CD8-positive, alpha-beta T cell (primary cell): ENCODE measurements at regions of chr9 and their contacts with region 1.

Region 1: GRCh38 chr9:79868567-79869189 is 296.9 kb downstream of the TLE4 start:
- DNase-seq: peak in 1 of 9 experiments; percentile 31
- ATAC-seq: no peak
- H3K4me3 ChIP-seq: no peak overlapping the region
- H3K4me3 Mint-ChIP-seq: no peak overlapping the region
- H3K27ac ChIP-seq: no peak overlapping the region
- H3K27ac Mint-ChIP-seq: no peak overlapping the region
- H3K4me1 ChIP-seq: peaks cover 12% of the 10 kb centered on the region
- H3K4me1 Mint-ChIP-seq: peaks cover 5% of the 10 kb centered on the region
- H3K27me3 ChIP-seq: no peaks in the 10 kb centered on the region
- H3K27me3 Mint-ChIP-seq: no peaks in the 10 kb centered on the region
- CTCF ChIP-seq: no peak

Region 2: GRCh38 chr9:79377339-79377855 is 491.3 kb before region 1 on chr9:
- CTCF ChIA-PET with region 1: no interaction called
- POLR2A ChIA-PET with region 1: no interaction called
- intact Hi-C with region 1: loop called in 1 of 2 experiments (anchors 1 kb)
- DNase-seq: no peak
- ATAC-seq: no peak
- H3K4me3 ChIP-seq: no peak overlapping the region
- H3K4me3 Mint-ChIP-seq: no peak overlapping the region
- H3K27ac ChIP-seq: no peak overlapping the region
- H3K27ac Mint-ChIP-seq: no peak overlapping the region
- H3K4me1 ChIP-seq: no peaks in the 10 kb centered on the region
- H3K4me1 Mint-ChIP-seq: no peaks in the 10 kb centered on the region
- H3K27me3 ChIP-seq: no peaks in the 10 kb centered on the region
- H3K27me3 Mint-ChIP-seq: peaks cover 3% of the 10 kb centered on the region
- CTCF ChIP-seq: no peak

Region 3: DNA sequence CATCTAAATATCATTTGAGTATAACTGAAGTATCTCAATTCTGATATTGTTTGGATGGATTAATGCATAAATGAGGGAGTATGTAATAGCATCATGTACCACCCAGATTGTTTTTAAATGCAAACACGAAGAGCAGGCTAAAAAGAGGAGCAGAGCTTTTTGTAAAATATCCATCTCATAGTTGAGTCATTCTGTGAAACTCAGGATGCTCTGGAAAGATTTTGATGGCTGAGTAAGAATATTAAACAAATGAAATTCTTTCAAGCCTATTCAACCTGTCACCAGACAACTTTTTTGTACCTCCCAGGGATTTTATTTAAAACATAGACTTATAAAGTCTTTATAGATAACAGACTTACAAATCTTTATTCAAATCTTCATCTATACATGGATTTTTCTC is 329.0 kb after region 1 on chr9:
- CTCF ChIA-PET with region 1: no interaction called
- POLR2A ChIA-PET with region 1: no interaction called
- intact Hi-C with region 1: no loop called
- DNase-seq: no peak
- ATAC-seq: no peak
- H3K4me3 ChIP-seq: no peak overlapping the region
- H3K4me3 Mint-ChIP-seq: no peak overlapping the region
- H3K27ac ChIP-seq: no peak overlapping the region
- H3K27ac Mint-ChIP-seq: no peak overlapping the region
- H3K4me1 ChIP-seq: no peaks in the 10 kb centered on the region
- H3K4me1 Mint-ChIP-seq: no peaks in the 10 kb centered on the region
- H3K27me3 ChIP-seq: no peaks in the 10 kb centered on the region
- H3K27me3 Mint-ChIP-seq: no peaks in the 10 kb centered on the region
- CTCF ChIP-seq: no peak